Ovary (tissue), 10 donors: ENCODE measurements at regions of chr14 and their contacts with region 1.

Region 1: GRCh38 chr14:58501214-58501816 is 73.8 kb downstream of the KIAA0586 start:
- DNase-seq: peak in 1 of 5 donors; percentile 31
- H3K4me3 ChIP-seq: no peak overlapping the region
- H3K27ac ChIP-seq: no peak overlapping the region
- H3K4me1 ChIP-seq: no peaks in the 10 kb centered on the region
- H3K27me3 ChIP-seq: no peaks in the 10 kb centered on the region
- CTCF ChIP-seq: peak; percentile 33 to 80 (median 78)
- EP300 ChIP-seq: no peak
- POLR2A ChIP-seq: no peak

Region 2: DNA sequence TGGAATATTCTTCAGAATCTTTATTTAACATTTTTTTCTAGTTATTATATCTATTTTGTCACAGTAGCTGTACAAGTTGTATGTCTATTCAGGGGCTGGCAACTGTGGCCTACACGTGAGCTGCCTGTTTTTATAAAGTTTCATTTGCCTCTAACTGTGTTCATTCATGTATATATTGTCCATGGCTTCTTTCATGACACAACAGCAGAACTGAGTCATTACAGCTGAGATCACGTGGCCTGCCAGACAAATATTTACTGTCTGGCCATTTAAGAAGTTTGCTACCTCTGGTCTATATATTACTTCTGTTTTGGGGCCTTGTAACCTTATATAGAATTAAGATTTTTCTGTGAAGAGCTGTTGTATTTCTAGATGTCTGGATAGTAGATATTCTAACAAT is 35.9 kb before region 1 on chr14:
- intact Hi-C with region 1: no loop called
- DNase-seq: no peak
- H3K4me3 ChIP-seq: no peak overlapping the region
- H3K27ac ChIP-seq: no peak overlapping the region
- H3K4me1 ChIP-seq: no peaks in the 10 kb centered on the region
- H3K27me3 ChIP-seq: peaks cover 3% of the 10 kb centered on the region
- CTCF ChIP-seq: no peak
- EP300 ChIP-seq: no peak
- POLR2A ChIP-seq: no peak

Region 3: GRCh38 chr14:58637391-58638230 is 136.3 kb after region 1 on chr14 and contains the start of gene DACT1:
- intact Hi-C with region 1: loop called in 2 of 4 experiments (anchors 5 to 10 kb)
- DNase-seq: peak; percentile 81 to 85 (median 82)
- H3K4me3 ChIP-seq: peak within 1 kb of the TSS; percentile 55
- H3K27ac ChIP-seq: peak within 1 kb of the TSS; percentile 96 to 97
- H3K4me1 ChIP-seq: no peaks in the 10 kb centered on the region
- H3K27me3 ChIP-seq: no peaks in the 10 kb centered on the region
- CTCF ChIP-seq: peak in 2 of 3 donors; percentile 12 to 37
- EP300 ChIP-seq: no peak
- POLR2A ChIP-seq: peak; percentile 55
- total RNA-seq, gene DACT1: 15.5 to 39.3 (median 22.7) TPM

Region 4: GRCh38 chr14:58765418-58765831 is 264.1 kb after region 1 on chr14:
- intact Hi-C with region 1: no loop called
- DNase-seq: no peak
- H3K4me3 ChIP-seq: no peak overlapping the region
- H3K27ac ChIP-seq: no peak overlapping the region
- H3K4me1 ChIP-seq: peaks cover 1% of the 10 kb centered on the region
- H3K27me3 ChIP-seq: no peaks in the 10 kb centered on the region
- CTCF ChIP-seq: no peak
- EP300 ChIP-seq: no peak
- POLR2A ChIP-seq: no peak

Region 5: DNA sequence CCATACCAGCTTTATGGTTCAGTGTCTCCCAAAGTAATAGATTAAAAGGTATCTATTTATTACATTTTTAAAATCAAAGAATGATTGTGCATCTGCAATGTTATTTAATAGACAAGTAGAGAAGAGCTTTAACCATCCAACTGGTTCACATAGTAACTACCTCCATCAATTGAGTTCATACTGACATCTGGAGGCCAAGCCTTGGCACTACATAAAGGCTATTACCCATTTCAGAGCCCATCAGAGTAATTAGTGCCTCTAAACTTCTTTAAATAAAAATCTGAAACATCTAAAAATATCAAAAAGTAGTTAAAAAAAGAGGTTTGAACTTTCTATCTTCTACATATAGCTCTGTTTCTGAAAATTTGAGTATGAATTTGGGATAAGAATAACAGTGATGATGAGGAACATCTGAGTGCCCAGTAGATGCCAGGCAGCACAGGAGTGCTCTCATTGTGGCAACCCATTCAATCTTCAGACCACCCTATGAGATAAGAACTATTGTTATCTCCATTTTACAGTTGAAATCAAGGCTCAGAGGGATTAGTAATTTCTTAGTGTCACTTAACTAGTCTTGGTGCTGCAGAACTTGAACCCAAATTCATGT is 554.2 kb after region 1 on chr14:
- intact Hi-C with region 1: loop called in 2 of 4 experiments (anchors 10 kb)
- DNase-seq: peak in 2 of 5 donors; percentile 38 to 64
- H3K4me3 ChIP-seq: no peak overlapping the region
- H3K27ac ChIP-seq: no peak overlapping the region
- H3K4me1 ChIP-seq: no peaks in the 10 kb centered on the region
- H3K27me3 ChIP-seq: no peaks in the 10 kb centered on the region
- CTCF ChIP-seq: peak in 2 of 3 donors; percentile 64 to 73
- EP300 ChIP-seq: no peak
- POLR2A ChIP-seq: no peak

Region 6: GRCh38 chr14:59126710-59127432 is 625.6 kb after region 1 on chr14:
- intact Hi-C with region 1: loop called in 1 of 4 experiments (anchors 5 kb)
- DNase-seq: peak in 2 of 5 donors; percentile 21 to 25
- H3K4me3 ChIP-seq: no peak overlapping the region
- H3K27ac ChIP-seq: no peak overlapping the region
- H3K4me1 ChIP-seq: no peaks in the 10 kb centered on the region
- H3K27me3 ChIP-seq: no peaks in the 10 kb centered on the region
- CTCF ChIP-seq: peak; percentile 42 to 81 (median 80)
- EP300 ChIP-seq: no peak
- POLR2A ChIP-seq: no peak

Region 7: DNA sequence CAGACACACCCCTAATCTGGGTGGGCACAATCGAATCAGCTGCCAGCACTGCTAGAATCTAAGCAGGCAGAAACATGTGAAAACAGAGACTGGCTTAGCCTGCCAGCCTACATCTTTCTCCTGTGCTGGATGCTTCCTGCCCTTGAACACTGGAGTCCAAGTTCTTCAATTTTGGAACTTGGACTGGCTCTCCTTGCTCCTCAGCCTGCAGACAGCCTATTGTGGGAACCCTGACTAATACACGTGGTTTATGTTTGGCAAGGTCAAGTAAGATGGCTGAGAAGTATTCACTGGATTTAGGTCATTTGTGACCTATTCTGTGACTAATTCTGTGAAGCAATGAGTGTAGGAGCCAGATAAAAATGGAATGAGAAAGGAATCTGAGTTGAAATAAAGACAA is 952.8 kb after region 1 on chr14:
- intact Hi-C with region 1: loop called in 1 of 4 experiments (anchors 10 kb)
- DNase-seq: no peak
- H3K4me3 ChIP-seq: no peak overlapping the region
- H3K27ac ChIP-seq: no peak overlapping the region
- H3K4me1 ChIP-seq: no peaks in the 10 kb centered on the region
- H3K27me3 ChIP-seq: no peaks in the 10 kb centered on the region
- CTCF ChIP-seq: no peak
- EP300 ChIP-seq: no peak
- POLR2A ChIP-seq: no peak